ENCODE measurements at regions of chr16 and their contacts with region 1.

Region 1: GRCh38 chr16:65305266-65305959 is 183.6 kb upstream of the CDH11 start:
- DNase-seq: no peak
- H3K4me3 ChIP-seq: no peak overlapping the region
- H3K27ac ChIP-seq: no peak overlapping the region
- H3K4me1 ChIP-seq: no peaks in the 10 kb centered on the region
- H3K27me3 ChIP-seq: no peaks in the 10 kb centered on the region
- CTCF ChIP-seq: no peak

Region 2: GRCh38 chr16:65388592-65388991 is 83.2 kb after region 1 on chr16:
- CTCF ChIA-PET with region 1: no interaction called
- dilution Hi-C with region 1: loop called (anchors 5 kb)
- in situ Hi-C with region 1: no loop called
- intact Hi-C with region 1: no loop called
- DNase-seq: peak; percentile 10
- H3K4me3 ChIP-seq: no peak overlapping the region
- H3K27ac ChIP-seq: no peak overlapping the region
- H3K4me1 ChIP-seq: peaks cover 10% of the 10 kb centered on the region
- H3K27me3 ChIP-seq: no peaks in the 10 kb centered on the region
- CTCF ChIP-seq: no peak